A673 (cell line): ENCODE measurements at regions of chr10 and their contacts with region 1.

Region 1: DNA sequence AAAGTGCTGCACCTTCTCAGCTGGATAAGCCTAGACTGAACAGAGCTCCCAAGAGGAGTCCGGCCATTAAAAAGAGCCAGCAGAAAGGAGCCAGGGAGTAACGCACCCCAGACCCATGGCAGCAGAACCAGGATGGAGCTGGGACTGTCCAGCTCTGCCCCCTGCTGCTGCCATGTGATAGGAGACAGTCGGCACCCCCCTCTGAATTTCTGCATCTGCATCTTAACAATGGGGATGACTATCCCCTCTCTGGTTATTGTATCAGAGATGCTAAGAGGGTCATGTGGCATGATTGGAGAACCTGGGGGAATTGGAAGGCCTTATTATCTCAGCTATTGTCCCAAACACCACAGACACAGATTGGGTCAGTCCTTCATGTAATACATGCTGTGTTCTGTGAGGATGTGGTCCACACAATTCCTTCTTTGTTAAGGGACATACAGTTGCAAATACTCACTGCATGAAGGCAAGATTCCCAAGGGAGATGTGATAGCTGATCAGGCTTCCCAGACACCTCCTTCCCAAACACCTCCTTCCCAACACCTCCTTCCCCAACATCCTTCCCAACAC is 29.3 kb downstream of the PLEKHS1 start:
- DNase-seq: no peak
- H3K4me3 ChIP-seq: no peak overlapping the region
- H3K27ac ChIP-seq: no peak overlapping the region
- H3K4me1 ChIP-seq: no peaks in the 10 kb centered on the region
- H3K27me3 ChIP-seq: no peaks in the 10 kb centered on the region
- CTCF ChIP-seq: no peak

Region 2: DNA sequence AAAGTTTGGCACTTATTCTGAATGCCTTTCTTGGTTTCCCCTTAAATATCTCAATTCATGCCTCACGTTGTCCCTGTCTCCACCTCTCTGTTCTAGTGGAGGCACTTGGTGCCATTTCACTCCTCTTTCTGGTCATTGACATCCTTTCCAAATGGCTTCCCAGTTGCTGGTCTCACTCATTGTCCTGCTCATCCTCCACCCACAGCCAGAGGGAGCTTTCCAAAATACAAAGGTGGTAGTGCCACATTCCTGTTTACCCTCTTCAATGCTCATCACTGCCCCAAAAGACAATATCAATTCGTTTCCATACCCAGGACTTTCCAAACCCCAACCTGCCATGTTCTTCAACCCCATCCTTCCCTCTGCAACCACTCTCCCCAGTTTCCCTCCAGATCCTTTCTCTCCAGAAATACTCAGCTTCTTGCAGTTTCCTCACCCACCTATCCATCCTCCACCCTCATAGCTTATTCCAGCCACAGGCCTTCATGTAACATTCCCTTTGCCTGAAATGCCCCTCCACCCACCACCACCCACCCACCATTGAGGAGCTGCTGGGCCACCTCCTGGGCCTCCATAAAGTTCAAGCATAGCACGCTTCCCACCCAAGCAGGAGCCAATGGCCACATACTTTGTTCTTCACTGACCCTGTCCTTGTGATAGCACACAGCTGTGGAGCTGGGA is 199.8 kb after region 1 on chr10:
- CTCF ChIA-PET with region 1: interaction called, 10 read pairs
- POLR2A ChIA-PET with region 1: no interaction called
- intact Hi-C with region 1: no loop called
- DNase-seq: peak; percentile 37
- H3K4me3 ChIP-seq: no peak overlapping the region
- H3K27ac ChIP-seq: no peak overlapping the region
- H3K4me1 ChIP-seq: peaks cover 38% of the 10 kb centered on the region
- H3K27me3 ChIP-seq: no peaks in the 10 kb centered on the region
- CTCF ChIP-seq: peak; percentile 49

Region 3: DNA sequence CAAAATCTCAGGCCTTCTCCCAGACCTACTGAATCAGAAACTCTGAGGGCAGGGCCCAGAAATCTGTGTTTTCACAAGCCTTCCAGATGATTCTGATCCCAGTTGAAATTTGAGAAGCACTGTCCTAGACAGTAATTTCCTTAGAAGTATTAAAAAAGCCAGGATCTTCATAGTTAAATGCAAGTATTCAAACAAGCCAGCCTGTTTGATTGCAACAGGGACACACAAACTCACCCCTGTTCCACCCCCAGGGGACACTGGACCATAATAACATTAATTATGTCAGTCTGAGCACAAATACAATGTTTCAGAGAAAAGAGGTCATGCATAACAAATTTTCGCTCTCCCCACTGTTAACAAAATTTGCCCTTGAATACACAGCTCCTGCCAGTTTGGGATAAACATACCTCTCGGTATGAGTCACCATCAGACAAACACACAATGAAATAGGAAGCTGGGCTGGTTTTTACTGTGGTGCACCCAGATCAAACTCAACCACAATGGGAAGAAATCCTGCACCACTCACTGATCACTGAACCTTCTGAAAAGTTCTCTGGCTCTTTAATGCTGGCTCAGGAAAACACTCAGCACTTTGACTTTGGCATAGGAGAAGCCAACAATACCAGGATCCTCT is 843.0 kb after region 1 on chr10:
- CTCF ChIA-PET with region 1: no interaction called
- POLR2A ChIA-PET with region 1: interaction called, 12 read pairs
- intact Hi-C with region 1: no loop called
- DNase-seq: peak; percentile 85
- H3K4me3 ChIP-seq: no peak overlapping the region
- H3K27ac ChIP-seq: no peak overlapping the region
- H3K4me1 ChIP-seq: peaks cover 3% of the 10 kb centered on the region
- H3K27me3 ChIP-seq: no peaks in the 10 kb centered on the region
- CTCF ChIP-seq: no peak